ENCODE measurements at regions of chr2 and their contacts with region 1.

Region 1: DNA sequence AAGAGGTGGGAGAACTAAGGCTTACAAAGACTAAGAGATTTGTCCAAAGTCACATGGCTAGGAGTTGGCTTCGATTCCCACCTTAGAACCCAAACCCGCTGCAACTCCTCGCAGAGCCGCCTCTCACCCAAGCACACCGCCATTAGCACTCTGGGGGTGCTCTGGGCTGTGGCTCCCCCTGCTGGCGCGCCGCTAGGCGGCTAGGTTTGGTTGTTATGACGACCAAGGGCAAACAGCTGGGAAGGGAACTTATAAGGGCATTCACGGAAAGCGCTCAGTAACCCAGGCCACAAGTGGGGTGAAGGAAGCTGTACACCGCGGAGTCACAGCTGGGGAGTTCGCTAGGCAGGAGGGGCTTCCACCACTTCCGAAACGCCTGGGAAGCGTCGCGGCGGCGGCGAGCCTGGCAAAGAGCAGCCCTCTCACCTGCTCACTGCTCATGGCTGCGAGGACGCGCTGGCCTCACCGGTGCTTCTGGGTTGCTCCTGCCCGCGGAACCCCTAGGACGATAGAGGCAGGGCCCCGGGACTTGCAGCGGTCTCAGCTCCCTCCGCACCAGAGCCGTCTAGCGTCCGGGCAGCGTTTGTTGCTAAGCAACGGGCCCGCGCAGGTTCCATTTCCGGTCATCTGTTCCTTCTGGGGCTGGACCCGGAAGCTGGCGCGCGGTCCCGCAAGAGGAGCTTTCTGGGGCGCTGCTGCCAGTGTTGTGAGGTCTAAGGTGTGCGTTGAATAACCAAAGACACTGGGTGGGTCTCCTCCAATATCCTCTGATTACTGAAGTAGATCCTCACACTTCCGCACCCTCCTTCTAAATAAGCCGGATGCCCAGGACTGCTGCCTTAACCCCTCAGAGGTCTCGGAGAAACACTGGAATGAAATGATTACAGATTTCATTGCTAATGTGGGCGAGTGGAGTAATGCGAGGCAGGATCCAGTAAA is at the start of gene DNAH7:
- DNase-seq: peak; percentile 79 to 97 (median 92)
- ATAC-seq: peak; percentile 94
- H3K4me3 ChIP-seq: peak within 1 kb of the TSS; percentile 62
- H3K4me3 Mint-ChIP-seq: peak within 1 kb of the TSS; percentile 83
- H3K27ac ChIP-seq: peak within 1 kb of the TSS; percentile 41 to 60
- H3K27ac Mint-ChIP-seq: peak within 1 kb of the TSS; percentile 81
- H3K4me1 ChIP-seq: peaks cover 9% of the 10 kb centered on the region
- H3K4me1 Mint-ChIP-seq: peaks cover 20% of the 10 kb centered on the region
- H3K27me3 ChIP-seq: no peaks in the 10 kb centered on the region
- H3K27me3 Mint-ChIP-seq: peaks cover under 1% of the 10 kb centered on the region
- CTCF ChIP-seq: peak; percentile 47
- total RNA-seq, gene DNAH7: not detected

Region 2: GRCh38 chr2:194166818-194167217 is 1901.7 kb before region 1 on chr2:
- CTCF ChIA-PET with region 1: no interaction called
- POLR2A ChIA-PET with region 1: no interaction called
- intact Hi-C with region 1: loop called in 1 of 2 experiments (anchors 2 kb)
- DNase-seq: peak in 3 of 9 experiments; percentile 8 to 25 (median 19)
- ATAC-seq: no peak
- H3K4me3 ChIP-seq: no peak overlapping the region
- H3K4me3 Mint-ChIP-seq: no peak overlapping the region
- H3K27ac ChIP-seq: no peak overlapping the region
- H3K27ac Mint-ChIP-seq: no peak overlapping the region
- H3K4me1 ChIP-seq: no peaks in the 10 kb centered on the region
- H3K4me1 Mint-ChIP-seq: no peaks in the 10 kb centered on the region
- H3K27me3 ChIP-seq: no peaks in the 10 kb centered on the region
- H3K27me3 Mint-ChIP-seq: no peaks in the 10 kb centered on the region
- CTCF ChIP-seq: no peak

Region 3: DNA sequence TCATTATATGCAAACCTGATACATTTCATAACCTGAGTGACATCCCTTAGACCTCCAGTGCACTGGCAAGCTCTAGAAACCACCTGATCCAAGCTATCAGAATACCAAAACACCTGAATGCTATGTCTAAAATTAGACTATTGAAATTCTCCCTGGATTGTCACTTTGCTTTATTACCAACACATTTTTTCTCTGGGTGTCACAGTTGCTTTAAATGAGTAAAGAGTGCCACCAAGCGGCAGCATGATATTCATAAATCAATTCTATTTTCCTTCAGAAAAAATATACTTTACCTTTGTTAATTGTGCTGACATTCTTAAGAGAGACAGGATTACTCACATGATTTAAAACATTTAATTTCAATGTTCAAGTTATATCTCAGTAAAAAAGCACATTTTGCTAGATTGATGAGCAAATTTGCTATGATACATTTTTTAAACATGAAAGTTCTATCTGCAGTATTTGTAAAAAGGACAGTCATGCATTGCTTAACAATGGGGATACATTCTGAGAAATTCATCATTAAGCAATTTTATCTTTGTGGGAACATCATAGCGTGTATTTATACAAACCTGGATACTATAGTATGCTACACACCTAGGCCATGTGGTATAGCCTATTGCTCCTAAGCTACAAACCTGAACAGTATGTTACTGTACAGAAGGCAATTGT is 750.0 kb before region 1 on chr2:
- CTCF ChIA-PET with region 1: no interaction called
- POLR2A ChIA-PET with region 1: no interaction called
- intact Hi-C with region 1: loop called in 1 of 2 experiments (anchors 5 kb)
- DNase-seq: peak in 7 of 9 experiments; percentile 1 to 64 (median 41)
- ATAC-seq: no peak
- H3K4me3 ChIP-seq: no peak overlapping the region
- H3K4me3 Mint-ChIP-seq: no peak overlapping the region
- H3K27ac ChIP-seq: no peak overlapping the region
- H3K27ac Mint-ChIP-seq: no peak overlapping the region
- H3K4me1 ChIP-seq: peaks cover 4% of the 10 kb centered on the region
- H3K4me1 Mint-ChIP-seq: peaks cover 8% of the 10 kb centered on the region
- H3K27me3 ChIP-seq: no peaks in the 10 kb centered on the region
- H3K27me3 Mint-ChIP-seq: no peaks in the 10 kb centered on the region
- CTCF ChIP-seq: peak; percentile 83

Region 4: GRCh38 chr2:195498176-195498575 is 570.4 kb before region 1 on chr2:
- CTCF ChIA-PET with region 1: interaction called, 10 read pairs
- POLR2A ChIA-PET with region 1: no interaction called
- intact Hi-C with region 1: loop called (anchors 1 to 2 kb)
- DNase-seq: peak; percentile 20 to 78 (median 66)
- ATAC-seq: peak; percentile 51
- H3K4me3 ChIP-seq: no peak overlapping the region
- H3K4me3 Mint-ChIP-seq: no peak overlapping the region
- H3K27ac ChIP-seq: no peak overlapping the region
- H3K27ac Mint-ChIP-seq: no peak overlapping the region
- H3K4me1 ChIP-seq: peaks cover 15% of the 10 kb centered on the region
- H3K4me1 Mint-ChIP-seq: peaks cover 47% of the 10 kb centered on the region
- H3K27me3 ChIP-seq: no peaks in the 10 kb centered on the region
- H3K27me3 Mint-ChIP-seq: no peaks in the 10 kb centered on the region
- CTCF ChIP-seq: peak; percentile 52

Region 5: GRCh38 chr2:195575879-195576401 is 492.6 kb before region 1 on chr2:
- CTCF ChIA-PET with region 1: no interaction called
- POLR2A ChIA-PET with region 1: no interaction called
- intact Hi-C with region 1: loop called in 1 of 2 experiments (anchors 5 kb)
- DNase-seq: peak in 2 of 9 experiments; percentile 43 to 64
- ATAC-seq: peak; percentile 57
- H3K4me3 ChIP-seq: no peak overlapping the region
- H3K4me3 Mint-ChIP-seq: peak overlapping the region; percentile 66
- H3K27ac ChIP-seq: no peak overlapping the region
- H3K27ac Mint-ChIP-seq: peak overlapping the region; percentile 84
- H3K4me1 ChIP-seq: peaks cover 51% of the 10 kb centered on the region
- H3K4me1 Mint-ChIP-seq: peaks cover 76% of the 10 kb centered on the region
- H3K27me3 ChIP-seq: no peaks in the 10 kb centered on the region
- H3K27me3 Mint-ChIP-seq: no peaks in the 10 kb centered on the region
- CTCF ChIP-seq: peak; percentile 6

Region 6: DNA sequence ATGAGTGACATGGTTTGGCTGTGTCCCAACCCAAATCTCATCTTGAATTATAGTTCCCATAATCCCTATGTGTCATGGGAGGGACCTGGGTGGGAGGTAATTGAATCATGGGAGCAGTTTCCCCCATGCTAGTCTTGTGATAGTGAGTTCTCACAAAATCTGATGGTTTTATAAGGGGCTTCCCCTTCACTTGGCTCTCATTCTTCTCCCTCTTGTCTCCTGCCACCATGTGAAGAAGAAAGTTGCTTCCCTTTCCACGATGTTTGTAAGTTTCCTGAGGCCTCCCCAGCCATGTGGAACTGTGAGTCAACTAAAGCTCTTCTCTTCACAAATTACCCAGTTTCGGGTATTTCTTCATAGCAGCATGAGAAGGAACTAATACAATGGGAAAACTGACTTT is 13.9 kb before region 1 on chr2:
- CTCF ChIA-PET with region 1: interaction called, 32 read pairs
- POLR2A ChIA-PET with region 1: interaction called, 3 read pairs
- intact Hi-C with region 1: no loop called
- DNase-seq: no peak
- ATAC-seq: no peak
- H3K4me3 ChIP-seq: no peak overlapping the region
- H3K4me3 Mint-ChIP-seq: no peak overlapping the region
- H3K27ac ChIP-seq: no peak overlapping the region
- H3K27ac Mint-ChIP-seq: no peak overlapping the region
- H3K4me1 ChIP-seq: no peaks in the 10 kb centered on the region
- H3K4me1 Mint-ChIP-seq: no peaks in the 10 kb centered on the region
- H3K27me3 ChIP-seq: no peaks in the 10 kb centered on the region
- H3K27me3 Mint-ChIP-seq: peaks cover 7% of the 10 kb centered on the region
- CTCF ChIP-seq: no peak

Region 7: DNA sequence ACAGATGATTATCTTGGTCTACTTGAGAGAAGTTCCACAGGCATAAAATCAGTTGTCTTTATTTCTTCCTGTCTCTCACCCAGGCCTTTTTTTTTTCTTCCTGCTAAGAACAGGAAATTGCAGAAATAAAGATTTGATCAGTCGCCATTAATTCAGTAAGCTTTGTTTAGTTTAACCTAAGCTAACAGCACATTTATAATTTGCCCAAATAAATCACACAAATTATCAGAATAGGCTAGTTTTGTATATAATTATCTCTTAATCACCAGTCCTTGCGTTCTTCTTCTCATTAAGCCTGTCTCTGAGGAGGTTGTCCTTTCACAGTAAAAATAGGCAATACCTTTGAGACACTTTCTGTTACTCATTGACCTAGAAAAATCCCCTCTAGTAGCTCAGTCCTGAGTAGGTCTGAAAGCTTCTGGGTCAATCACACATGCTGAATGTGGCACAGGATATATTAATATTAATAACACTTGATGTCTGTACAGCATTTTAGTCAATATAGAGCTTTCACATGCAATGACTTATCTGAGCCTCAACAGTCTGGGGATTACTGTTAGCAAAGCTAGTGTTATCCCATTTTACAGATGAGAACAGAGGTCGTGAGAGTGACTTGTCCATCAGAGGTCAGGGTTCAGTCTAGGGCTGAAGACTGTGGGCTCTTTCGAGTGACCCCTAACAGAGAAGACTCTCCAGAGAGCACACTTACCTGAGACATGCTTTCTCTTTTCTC is 114.1 kb after region 1 on chr2:
- CTCF ChIA-PET with region 1: no interaction called
- POLR2A ChIA-PET with region 1: no interaction called
- intact Hi-C with region 1: no loop called
- DNase-seq: peak in 2 of 9 experiments; percentile 60 to 77
- ATAC-seq: peak; percentile 22
- H3K4me3 ChIP-seq: no peak overlapping the region
- H3K4me3 Mint-ChIP-seq: peak overlapping the region; percentile 68
- H3K27ac ChIP-seq: peak overlapping the region; percentile 20 to 88
- H3K27ac Mint-ChIP-seq: peak overlapping the region; percentile 92
- H3K4me1 ChIP-seq: peaks cover 70% of the 10 kb centered on the region
- H3K4me1 Mint-ChIP-seq: peaks cover 88% of the 10 kb centered on the region
- H3K27me3 ChIP-seq: no peaks in the 10 kb centered on the region
- H3K27me3 Mint-ChIP-seq: no peaks in the 10 kb centered on the region
- CTCF ChIP-seq: no peak

Region 8: DNA sequence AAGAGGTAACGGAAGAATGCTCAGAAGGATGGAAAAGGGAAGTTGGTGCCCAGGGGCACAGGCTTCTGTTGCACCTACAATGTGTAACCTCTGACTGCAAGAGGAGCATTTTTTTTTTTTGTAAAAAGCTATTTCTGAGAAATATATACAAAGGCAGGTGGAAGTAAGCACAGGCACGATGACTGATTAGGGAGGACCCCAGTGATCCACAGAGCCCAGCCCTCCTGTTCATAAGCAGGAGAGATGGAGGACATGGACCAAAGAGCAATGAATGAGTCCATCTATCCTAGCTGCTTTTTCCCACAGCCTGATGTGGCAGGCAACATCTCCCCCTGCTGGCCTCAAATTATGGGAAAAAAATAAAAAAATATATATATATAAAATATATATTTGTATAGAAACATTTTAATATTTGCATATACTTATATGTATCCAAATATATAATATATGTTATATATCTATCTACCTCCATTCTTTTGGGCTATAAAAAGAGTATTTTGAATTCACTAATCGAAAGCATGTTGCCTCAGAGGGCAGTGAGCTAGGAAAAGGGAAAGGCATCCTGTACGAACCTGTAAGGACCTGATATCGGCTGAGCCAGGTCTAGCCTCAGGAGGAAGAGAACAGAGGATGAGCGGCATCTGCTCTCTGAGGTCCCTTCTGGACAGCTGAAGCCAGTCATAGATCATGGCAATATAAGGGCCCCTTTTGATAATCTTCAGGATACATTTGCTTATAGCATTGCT is 268.8 kb after region 1 on chr2:
- CTCF ChIA-PET with region 1: interaction called, 28 read pairs
- POLR2A ChIA-PET with region 1: no interaction called
- intact Hi-C with region 1: no loop called
- DNase-seq: peak in 4 of 9 experiments; percentile 13 to 58 (median 28)
- ATAC-seq: no peak
- H3K4me3 ChIP-seq: no peak overlapping the region
- H3K4me3 Mint-ChIP-seq: no peak overlapping the region
- H3K27ac ChIP-seq: no peak overlapping the region
- H3K27ac Mint-ChIP-seq: no peak overlapping the region
- H3K4me1 ChIP-seq: no peaks in the 10 kb centered on the region
- H3K4me1 Mint-ChIP-seq: peaks cover 3% of the 10 kb centered on the region
- H3K27me3 ChIP-seq: no peaks in the 10 kb centered on the region
- H3K27me3 Mint-ChIP-seq: peaks cover 3% of the 10 kb centered on the region
- CTCF ChIP-seq: peak; percentile 67

Measured in CD8-positive, alpha-beta T cell (primary cell).